ENCODE measurements at regions of chr9 and their contacts with region 1.

Region 1: DNA sequence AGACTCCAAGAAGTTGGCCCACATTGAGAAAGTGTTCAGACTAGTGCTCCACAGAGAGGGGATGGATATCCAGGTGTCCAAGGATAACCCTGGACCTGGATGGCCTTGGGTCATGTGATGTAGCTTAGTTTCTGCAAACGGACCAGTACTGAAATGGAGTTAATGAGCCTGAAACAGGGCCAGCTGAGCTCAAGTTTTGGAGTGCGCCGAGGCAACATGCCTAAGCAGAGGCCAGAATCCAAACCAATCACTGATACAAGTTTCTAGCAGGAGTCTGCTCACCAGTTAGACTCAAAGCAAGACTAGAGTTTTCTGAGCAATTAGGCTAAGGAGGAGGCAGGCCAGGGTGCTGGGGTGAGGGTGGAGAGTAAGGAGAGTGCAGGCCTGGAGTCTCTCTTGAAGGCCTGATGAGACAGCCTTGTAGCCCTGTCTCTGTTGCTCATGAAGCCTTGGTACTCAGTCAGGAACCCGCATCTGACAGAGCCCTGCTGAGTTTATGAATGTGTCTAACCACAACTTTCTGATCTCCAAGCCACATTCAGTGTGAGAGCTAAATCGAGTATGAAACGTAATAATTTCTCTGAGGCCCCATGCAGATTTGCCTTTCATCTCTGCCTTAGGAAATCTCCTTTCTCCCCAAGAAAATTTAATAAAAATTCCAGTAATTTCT is 68.9 kb upstream of the EQTN start:
- DNase-seq: peak; percentile 73
- H3K4me3 Mint-ChIP-seq: no peak overlapping the region
- H3K27ac Mint-ChIP-seq: no peak overlapping the region
- H3K4me1 Mint-ChIP-seq: peaks cover 26% of the 10 kb centered on the region
- H3K27me3 Mint-ChIP-seq: peaks cover 9% of the 10 kb centered on the region

Region 2: DNA sequence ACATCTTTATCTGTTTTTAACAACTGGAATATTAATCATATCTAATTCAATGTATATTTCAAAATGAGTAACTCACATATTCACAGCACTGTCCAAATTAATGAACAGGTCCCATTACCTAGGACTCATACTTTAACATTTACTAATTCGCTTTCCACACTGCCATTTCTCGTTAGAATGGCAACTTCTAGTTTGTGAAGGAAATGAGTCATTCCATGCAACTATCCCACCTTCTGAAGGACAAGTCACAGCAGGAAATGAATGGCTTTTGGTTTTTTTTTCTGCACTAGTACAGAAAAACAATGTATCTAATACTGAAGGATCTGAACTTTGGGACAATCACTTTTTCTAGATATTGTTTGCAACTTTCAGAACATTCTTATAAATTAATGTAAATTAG is 133.6 kb after region 1 on chr9:
- CTCF ChIA-PET with region 1: no interaction called
- POLR2A ChIA-PET with region 1: no interaction called
- intact Hi-C with region 1: loop called (anchors 2 kb)
- DNase-seq: no peak
- H3K4me3 Mint-ChIP-seq: no peak overlapping the region
- H3K27ac Mint-ChIP-seq: no peak overlapping the region
- H3K4me1 Mint-ChIP-seq: peaks cover 14% of the 10 kb centered on the region
- H3K27me3 Mint-ChIP-seq: peaks cover 6% of the 10 kb centered on the region